Endothelial cell of umbilical vein (primary cell): ENCODE measurements at regions of chr13 and their contacts with region 1.

Region 1: DNA sequence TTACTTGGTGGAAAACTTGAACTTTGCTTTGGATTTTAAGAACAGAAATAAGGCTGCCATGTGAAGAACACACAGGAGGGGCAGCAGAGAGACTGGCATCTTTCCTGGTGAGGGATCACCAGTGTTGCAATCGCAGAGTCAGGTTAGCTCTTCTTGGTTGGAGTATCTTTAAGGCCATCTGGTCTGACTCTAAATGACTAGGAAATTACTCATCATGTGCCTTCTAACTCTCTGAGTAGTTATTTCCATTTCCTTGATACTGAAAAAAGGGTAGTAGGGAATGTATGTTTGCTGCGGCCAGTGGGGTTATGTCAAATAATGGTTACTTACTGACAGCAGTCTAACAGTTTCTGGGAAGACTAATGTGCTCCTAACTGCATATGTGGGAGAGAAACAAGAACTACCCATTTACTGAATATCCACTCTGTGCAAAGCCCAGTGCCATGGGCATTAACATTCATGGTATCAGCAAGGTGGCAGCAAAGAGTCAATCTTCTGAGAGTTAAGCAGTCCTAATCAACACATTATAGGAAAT is 122.1 kb downstream of the COG6 start:
- DNase-seq: peak; percentile 88
- H3K4me3 ChIP-seq: no peak overlapping the region
- H3K27ac ChIP-seq: peak overlapping the region; percentile 99
- H3K4me1 ChIP-seq: peaks cover 59% of the 10 kb centered on the region
- H3K27me3 ChIP-seq: no peaks in the 10 kb centered on the region
- CTCF ChIP-seq: peak; percentile 51 to 52
- POLR2A ChIP-seq: no peak

Region 2: GRCh38 chr13:39740783-39741182 is 36.8 kb before region 1 on chr13:
- CTCF ChIA-PET with region 1: no interaction called
- POLR2A ChIA-PET with region 1: no interaction called
- dilution Hi-C with region 1: no loop called
- intact Hi-C with region 1: no loop called
- DNase-seq: no peak
- H3K4me3 ChIP-seq: no peak overlapping the region
- H3K27ac ChIP-seq: no peak overlapping the region
- H3K4me1 ChIP-seq: no peaks in the 10 kb centered on the region
- H3K27me3 ChIP-seq: no peaks in the 10 kb centered on the region
- CTCF ChIP-seq: no peak
- POLR2A ChIP-seq: no peak

Region 3: GRCh38 chr13:39942552-39943273 is 165.1 kb after region 1 on chr13:
- CTCF ChIA-PET with region 1: interaction called, 39 read pairs
- POLR2A ChIA-PET with region 1: no interaction called
- dilution Hi-C with region 1: no loop called
- intact Hi-C with region 1: no loop called
- DNase-seq: peak; percentile 71
- H3K4me3 ChIP-seq: no peak overlapping the region
- H3K27ac ChIP-seq: no peak overlapping the region
- H3K4me1 ChIP-seq: peaks cover 3% of the 10 kb centered on the region
- H3K27me3 ChIP-seq: no peaks in the 10 kb centered on the region
- CTCF ChIP-seq: peak; percentile 86 to 94
- POLR2A ChIP-seq: no peak

Region 4: GRCh38 chr13:40116008-40116407 is 338.4 kb after region 1 on chr13:
- CTCF ChIA-PET with region 1: no interaction called
- POLR2A ChIA-PET with region 1: no interaction called
- dilution Hi-C with region 1: no loop called
- intact Hi-C with region 1: loop called (anchors 2 kb)
- DNase-seq: peak; percentile 98
- H3K4me3 ChIP-seq: no peak overlapping the region
- H3K27ac ChIP-seq: peak overlapping the region; percentile 93
- H3K4me1 ChIP-seq: peaks cover 17% of the 10 kb centered on the region
- H3K27me3 ChIP-seq: no peaks in the 10 kb centered on the region
- CTCF ChIP-seq: no peak
- POLR2A ChIP-seq: no peak

Region 5: GRCh38 chr13:40401911-40402776 is 624.5 kb after region 1 on chr13:
- CTCF ChIA-PET with region 1: no interaction called
- POLR2A ChIA-PET with region 1: no interaction called
- dilution Hi-C with region 1: no loop called
- intact Hi-C with region 1: loop called (anchors 5 kb)
- DNase-seq: peak; percentile 93
- H3K4me3 ChIP-seq: no peak overlapping the region
- H3K27ac ChIP-seq: peak overlapping the region; percentile 61
- H3K4me1 ChIP-seq: peaks cover 31% of the 10 kb centered on the region
- H3K27me3 ChIP-seq: no peaks in the 10 kb centered on the region
- CTCF ChIP-seq: no peak
- POLR2A ChIP-seq: no peak

Region 6: DNA sequence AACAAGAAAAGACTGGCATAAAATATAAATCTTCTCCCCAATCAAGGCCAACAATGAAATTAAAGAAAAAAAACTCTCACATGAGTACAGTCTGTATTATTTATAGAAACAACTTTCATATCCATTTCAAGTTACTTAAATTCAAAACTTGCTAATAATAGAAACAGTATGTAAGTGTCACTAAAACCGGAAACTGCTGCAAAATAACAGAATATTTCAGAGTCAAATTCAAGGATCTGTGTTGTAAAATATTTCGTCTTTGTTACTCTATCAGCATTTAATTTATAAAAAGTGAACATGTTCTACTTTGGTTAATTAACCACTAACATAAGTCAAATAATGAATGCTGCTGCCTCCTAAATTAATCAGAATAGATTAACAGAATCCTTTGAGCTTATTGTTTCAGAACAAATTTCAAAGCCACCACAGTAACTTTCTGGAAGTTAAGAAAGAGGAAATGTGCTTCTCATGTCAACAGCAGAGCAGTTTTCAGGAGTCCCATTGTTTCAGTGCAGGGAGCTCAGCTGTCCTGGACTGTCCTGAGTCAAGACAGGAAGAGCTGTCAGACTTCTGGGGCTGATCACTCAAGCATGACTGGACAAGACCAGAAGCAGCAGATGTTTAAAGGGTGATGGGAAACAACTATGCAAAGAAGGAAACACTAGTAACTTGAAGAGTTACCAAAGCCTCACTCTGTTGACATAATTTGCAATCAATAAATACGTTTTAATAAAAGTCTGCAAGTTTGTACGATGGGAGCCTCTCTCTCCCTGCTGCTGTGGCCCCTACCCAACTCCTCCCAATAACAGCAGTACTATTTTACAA is 811.9 kb after region 1 on chr13:
- CTCF ChIA-PET with region 1: no interaction called
- POLR2A ChIA-PET with region 1: no interaction called
- dilution Hi-C with region 1: no loop called
- intact Hi-C with region 1: loop called (anchors 5 kb)
- DNase-seq: peak; percentile 94
- H3K4me3 ChIP-seq: peak overlapping the region in 1 of 3 experiments; percentile 14
- H3K27ac ChIP-seq: peak overlapping the region; percentile 87
- H3K4me1 ChIP-seq: peaks cover 69% of the 10 kb centered on the region
- H3K27me3 ChIP-seq: no peaks in the 10 kb centered on the region
- CTCF ChIP-seq: no peak
- POLR2A ChIP-seq: peak; percentile 57